ENCODE measurements at regions of chr12 and their contacts with region 1.

Region 1: DNA sequence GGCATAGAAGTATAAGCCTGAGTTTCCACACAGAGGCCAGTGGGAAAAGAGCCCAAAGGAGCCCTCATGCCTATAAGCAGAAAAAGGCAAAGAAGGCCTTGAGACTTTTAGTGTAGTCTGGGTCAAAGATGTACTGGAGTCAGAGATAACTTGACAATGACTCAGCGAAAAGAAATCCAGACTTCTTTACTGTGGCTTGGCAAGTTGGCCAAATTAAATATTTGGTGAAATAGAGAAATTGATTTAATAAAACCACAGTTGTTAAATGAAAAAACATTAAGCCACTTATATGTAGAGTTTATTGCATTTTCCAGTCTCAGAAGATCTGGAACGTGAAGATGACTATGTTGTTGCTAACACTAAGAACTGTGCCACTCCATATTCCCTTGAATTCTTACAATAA is 105.1 kb downstream of the TMTC3 start:
- DNase-seq: peak; percentile 96
- ATAC-seq: peak; percentile 92
- H3K4me3 ChIP-seq: no peak overlapping the region
- H3K27ac ChIP-seq: peak overlapping the region; percentile 56
- H3K4me1 ChIP-seq: peaks cover 33% of the 10 kb centered on the region
- H3K27me3 ChIP-seq: no peaks in the 10 kb centered on the region
- CTCF ChIP-seq: no peak

Region 2: GRCh38 chr12:88186003-88186402 is 61.2 kb before region 1 on chr12:
- CTCF ChIA-PET with region 1: no interaction called
- POLR2A ChIA-PET with region 1: no interaction called
- intact Hi-C with region 1: loop called (anchors 1 kb)
- DNase-seq: peak; percentile 89
- ATAC-seq: peak; percentile 87
- H3K4me3 ChIP-seq: no peak overlapping the region
- H3K27ac ChIP-seq: peak overlapping the region; percentile 88
- H3K4me1 ChIP-seq: peaks cover 57% of the 10 kb centered on the region
- H3K27me3 ChIP-seq: no peaks in the 10 kb centered on the region
- CTCF ChIP-seq: no peak

Region 3: DNA sequence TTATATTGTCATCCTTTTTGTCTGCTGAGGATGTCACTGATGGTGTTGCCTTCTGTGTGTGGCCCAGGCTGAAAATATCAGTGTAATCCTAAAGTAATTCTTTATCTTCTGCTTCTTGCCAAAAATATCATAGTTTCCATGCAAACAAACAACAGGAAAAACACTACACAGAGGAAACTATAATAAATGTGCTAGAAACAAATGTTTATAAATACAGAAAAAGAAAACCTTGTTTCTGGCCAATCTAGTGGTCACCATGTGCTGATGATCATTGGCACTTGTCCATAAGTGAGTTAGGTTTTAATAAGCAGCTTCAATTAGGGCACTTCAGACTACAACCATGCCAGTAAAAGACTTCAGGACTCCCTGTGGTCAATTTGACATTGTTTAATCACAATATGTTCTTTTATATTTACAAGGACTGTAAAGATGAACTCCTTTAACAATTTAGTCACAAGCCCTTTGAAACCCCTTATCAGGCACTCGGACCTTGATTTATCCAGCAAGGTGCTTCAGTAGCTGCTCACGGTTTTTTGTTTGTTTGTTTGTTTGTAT is 19.6 kb after region 1 on chr12:
- CTCF ChIA-PET with region 1: no interaction called
- POLR2A ChIA-PET with region 1: no interaction called
- intact Hi-C with region 1: no loop called
- DNase-seq: no peak
- ATAC-seq: no peak
- H3K4me3 ChIP-seq: no peak overlapping the region
- H3K27ac ChIP-seq: no peak overlapping the region
- H3K4me1 ChIP-seq: no peaks in the 10 kb centered on the region
- H3K27me3 ChIP-seq: no peaks in the 10 kb centered on the region
- CTCF ChIP-seq: no peak

Region 4: GRCh38 chr12:88401155-88401554 is 153.9 kb after region 1 on chr12:
- CTCF ChIA-PET with region 1: no interaction called
- POLR2A ChIA-PET with region 1: no interaction called
- intact Hi-C with region 1: loop called (anchors 1 kb)
- DNase-seq: peak; percentile 88
- ATAC-seq: peak; percentile 93
- H3K4me3 ChIP-seq: peak overlapping the region; percentile 64
- H3K27ac ChIP-seq: peak overlapping the region; percentile 61
- H3K4me1 ChIP-seq: peaks cover 21% of the 10 kb centered on the region
- H3K27me3 ChIP-seq: no peaks in the 10 kb centered on the region
- CTCF ChIP-seq: no peak

Region 5: GRCh38 chr12:88553941-88554658 is 306.9 kb after region 1 on chr12:
- CTCF ChIA-PET with region 1: no interaction called
- POLR2A ChIA-PET with region 1: no interaction called
- intact Hi-C with region 1: loop called (anchors 2 kb)
- DNase-seq: peak; percentile 92
- ATAC-seq: peak; percentile 44
- H3K4me3 ChIP-seq: no peak overlapping the region
- H3K27ac ChIP-seq: peak overlapping the region; percentile 83
- H3K4me1 ChIP-seq: peaks cover 38% of the 10 kb centered on the region
- H3K27me3 ChIP-seq: no peaks in the 10 kb centered on the region
- CTCF ChIP-seq: no peak